Thyroid gland (tissue), 4 donors: ENCODE measurements at regions of chr22 and their contacts with region 1.

Region 1: GRCh38 chr22:24951942-24952836 is at the start of gene KIAA1671:
- DNase-seq: peak; percentile 90 to 93
- H3K4me3 ChIP-seq: peak within 1 kb of the TSS; percentile 69 to 84 (median 73)
- H3K27ac ChIP-seq: peak within 1 kb of the TSS; percentile 78 to 94 (median 84)
- H3K4me1 ChIP-seq: peaks cover 14 to 31% of the 10 kb centered on the region in 2 donors
- H3K27me3 ChIP-seq: no peaks in the 10 kb centered on the region
- CTCF ChIP-seq: peak; percentile 86 to 99 (median 96)
- POLR2A ChIP-seq: peak; percentile 93 to 96
- total RNA-seq, gene KIAA1671: 63.2 to 111 (median 79.7) TPM

Region 2: DNA sequence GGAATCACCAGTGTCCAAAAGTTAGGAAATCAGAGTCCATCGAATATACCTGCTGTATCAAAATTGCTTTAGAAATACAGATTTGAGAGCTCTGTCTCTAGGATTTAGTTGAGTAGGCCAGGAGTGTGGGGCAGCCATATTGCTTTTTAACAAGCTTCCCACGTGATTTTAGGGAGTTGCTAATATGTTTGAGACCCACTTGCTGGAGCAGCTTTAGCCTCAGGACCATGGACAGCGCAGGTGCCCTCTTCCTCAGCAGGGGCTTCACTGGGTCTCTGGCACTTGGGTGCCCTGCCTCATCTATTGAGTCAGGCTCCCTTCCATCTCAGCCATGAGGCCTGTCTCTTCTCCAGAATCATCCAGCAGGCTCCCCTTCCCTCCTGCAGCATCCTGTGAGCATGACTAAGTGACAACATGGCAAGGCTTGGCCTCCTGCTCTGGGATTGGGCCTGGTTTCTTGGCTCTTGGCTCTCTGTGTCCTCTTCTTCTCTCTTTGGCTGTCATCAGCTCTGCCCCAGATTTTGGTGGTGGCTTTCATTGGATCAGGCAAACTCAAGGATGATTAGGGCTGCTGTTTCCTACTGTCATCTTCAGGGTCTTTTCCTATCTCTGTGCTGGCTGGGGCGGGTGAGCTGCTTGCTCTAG is 76.2 kb before region 1 on chr22:
- intact Hi-C with region 1: no loop called
- DNase-seq: peak in 1 of 2 donors; percentile 26
- H3K4me3 ChIP-seq: no peak overlapping the region
- H3K27ac ChIP-seq: no peak overlapping the region
- H3K4me1 ChIP-seq: no peaks in the 10 kb centered on the region
- H3K27me3 ChIP-seq: no peaks in the 10 kb centered on the region
- CTCF ChIP-seq: no peak
- POLR2A ChIP-seq: no peak

Region 3: DNA sequence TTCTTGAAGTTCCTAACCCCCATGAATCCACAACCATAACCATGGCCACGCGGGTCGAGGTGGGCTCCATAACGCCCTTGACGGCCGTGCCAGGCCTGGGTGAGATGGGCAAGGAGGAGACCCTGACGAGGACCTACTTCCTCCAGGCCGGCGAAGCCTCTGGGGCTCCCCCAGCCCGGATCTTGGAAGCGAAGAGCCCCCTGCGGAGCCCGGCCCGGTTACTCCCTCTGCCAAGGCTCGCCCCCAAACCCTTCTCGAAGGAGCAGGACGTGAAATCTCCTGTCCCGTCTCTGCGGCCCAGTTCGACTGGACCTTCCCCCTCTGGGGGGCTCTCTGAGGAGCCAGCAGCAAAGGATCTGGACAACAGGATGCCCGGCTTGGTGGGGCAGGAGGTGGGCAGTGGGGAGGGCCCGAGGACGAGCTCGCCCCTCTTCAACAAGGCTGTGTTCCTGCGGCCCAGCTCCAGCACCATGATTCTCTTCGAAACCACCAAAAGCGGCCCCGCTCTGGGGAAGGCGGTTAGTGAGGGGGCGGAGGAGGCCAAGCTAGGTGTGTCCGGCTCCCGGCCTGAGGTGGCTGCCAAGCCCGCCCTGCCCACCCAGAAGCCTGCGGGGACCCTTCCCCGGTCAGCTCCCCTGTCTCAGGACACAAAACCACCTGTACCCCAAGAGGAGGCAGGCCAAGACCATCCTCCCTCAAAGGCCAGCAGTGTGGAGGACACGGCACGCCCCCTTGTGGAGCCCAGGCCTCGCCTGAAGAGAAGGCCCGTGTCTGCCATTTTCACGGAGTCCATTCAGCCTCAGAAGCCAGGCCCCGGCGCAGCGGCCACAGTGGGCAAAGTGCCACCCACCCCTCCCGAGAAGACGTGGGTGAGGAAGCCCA is 76.0 kb after region 1 on chr22:
- intact Hi-C with region 1: loop called (anchors 5 kb)
- DNase-seq: no peak
- H3K4me3 ChIP-seq: no peak overlapping the region
- H3K27ac ChIP-seq: peak overlapping the region in 2 of 3 donors; percentile 1 to 60
- H3K4me1 ChIP-seq: peaks cover 28 to 39% of the 10 kb centered on the region in 2 donors
- H3K27me3 ChIP-seq: no peaks in the 10 kb centered on the region
- CTCF ChIP-seq: peak in 2 of 6 experiments; percentile 15 to 30
- POLR2A ChIP-seq: no peak

Region 4: DNA sequence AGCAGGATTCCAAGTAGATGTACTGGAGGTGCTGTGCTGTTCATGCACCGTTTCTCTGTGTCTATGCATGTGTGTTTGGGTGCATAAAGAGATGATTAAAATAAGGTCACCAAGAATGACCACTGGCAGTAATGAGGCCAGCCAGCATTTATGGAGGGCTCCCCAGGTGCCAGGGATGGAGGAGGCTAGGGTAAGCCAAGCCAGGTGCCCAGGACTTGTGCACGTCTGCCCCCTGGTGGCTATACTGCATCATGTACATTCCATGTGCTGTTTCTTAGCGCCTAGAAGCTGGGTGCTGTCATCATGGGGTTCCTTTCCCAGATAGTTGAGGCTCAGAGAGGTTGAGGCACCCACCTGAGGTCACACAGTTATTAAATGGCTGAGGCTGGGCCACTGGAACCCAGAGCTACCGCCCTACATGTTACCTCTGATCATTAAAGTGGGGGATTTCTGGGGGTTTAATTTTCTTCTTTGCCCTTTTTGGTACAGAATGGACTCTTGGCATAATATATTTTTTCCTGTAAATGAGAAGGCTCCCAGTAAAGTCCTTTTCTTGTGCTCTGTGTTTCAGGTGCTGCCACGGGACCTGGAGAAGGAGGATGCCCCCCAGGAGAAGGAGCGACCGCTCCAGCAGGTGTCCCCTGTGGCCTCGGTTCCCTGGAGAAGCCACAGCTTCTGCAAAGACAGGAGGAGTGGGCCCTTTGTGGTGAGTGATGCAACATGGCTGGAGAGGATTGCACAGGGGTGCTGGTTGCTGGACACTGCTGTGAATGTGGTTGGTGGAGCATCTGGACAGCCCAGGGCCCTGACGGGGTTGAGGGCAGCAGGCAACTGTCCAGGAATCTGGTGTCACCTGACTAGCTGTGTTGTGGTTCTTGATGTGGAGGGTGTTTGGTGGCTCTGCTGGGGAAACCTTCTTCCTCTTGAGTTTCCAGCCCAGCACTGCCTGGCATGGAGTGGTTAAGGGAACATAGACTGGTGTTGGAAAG is 96.8 kb after region 1 on chr22:
- intact Hi-C with region 1: loop called (anchors 2 kb)
- DNase-seq: peak; percentile 75 to 77
- H3K4me3 ChIP-seq: no peak overlapping the region
- H3K27ac ChIP-seq: peak overlapping the region in 2 of 3 donors; percentile 24 to 91
- H3K4me1 ChIP-seq: peaks cover 36 to 38% of the 10 kb centered on the region in 2 donors
- H3K27me3 ChIP-seq: no peaks in the 10 kb centered on the region
- CTCF ChIP-seq: peak; percentile 84 to 94 (median 86)
- POLR2A ChIP-seq: no peak

Region 5: DNA sequence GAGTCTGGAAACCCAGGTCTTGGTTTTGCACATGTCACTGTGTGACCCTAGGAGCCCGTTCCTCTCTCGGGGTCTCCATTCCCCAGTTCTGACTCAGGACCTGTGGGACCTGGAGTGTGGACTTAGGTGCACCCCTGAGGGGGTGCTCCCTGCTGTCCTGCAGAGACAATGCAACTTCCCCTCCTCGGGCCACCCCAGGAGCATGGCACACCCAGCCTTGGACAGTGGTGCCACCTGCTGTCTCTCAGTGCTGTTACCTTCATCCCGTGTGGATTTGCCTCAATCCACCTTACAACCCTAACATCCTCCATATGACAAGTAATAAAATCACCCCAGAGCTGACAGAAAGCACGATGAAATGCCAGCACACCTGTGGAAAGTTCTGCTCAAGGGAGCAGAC is 220.0 kb after region 1 on chr22:
- intact Hi-C with region 1: loop called (anchors 10 kb)
- DNase-seq: peak; percentile 34 to 41
- H3K4me3 ChIP-seq: no peak overlapping the region
- H3K27ac ChIP-seq: no peak overlapping the region
- H3K4me1 ChIP-seq: peaks cover 3 to 17% of the 10 kb centered on the region in 2 donors
- H3K27me3 ChIP-seq: no peaks in the 10 kb centered on the region
- CTCF ChIP-seq: peak in 5 of 6 experiments; percentile 30 to 51 (median 40)
- POLR2A ChIP-seq: no peak

Region 6: DNA sequence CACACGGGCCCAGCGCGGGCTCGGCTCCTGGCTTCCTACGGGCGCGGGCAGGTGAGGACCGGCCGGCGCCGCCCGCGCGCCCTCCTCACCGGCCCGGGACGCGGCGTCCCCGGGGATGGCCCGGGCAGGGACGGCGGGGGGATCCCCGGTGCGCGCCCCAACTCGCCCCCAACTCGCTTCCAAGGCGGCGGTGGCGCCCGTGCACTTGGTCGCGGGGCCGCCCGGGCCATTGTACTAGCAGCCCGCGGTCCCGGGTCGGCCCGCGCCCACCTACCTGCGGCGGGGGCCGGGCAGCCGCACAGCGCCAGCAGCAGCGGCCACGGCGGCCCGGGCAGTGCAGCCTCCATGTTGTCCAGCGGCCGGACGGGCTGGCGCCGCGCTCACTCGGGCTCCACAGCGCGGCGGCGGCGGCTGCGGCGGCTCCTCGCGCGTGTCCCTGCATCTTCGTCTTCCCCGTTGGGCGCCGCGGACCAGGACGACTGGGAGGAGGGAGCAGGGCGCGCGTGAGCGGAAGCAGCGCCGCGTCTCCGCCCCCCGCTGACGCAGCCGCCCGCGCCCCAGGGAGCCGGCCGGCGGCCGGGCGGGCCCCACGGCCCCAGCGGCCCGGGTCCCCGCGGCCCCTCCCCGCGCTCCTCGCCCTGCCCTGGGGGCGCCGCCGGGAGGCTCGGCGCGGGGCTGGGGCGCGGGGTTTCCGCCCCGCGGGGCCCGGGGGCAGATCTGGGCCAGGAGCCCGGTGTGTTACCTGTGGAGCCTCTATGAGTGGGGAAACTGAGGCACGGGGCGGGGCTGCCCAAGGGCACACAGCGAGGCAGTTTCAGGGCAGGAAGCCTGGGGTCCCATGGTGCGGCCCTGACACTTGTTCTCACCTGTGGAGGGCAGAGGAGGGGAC is 453.0 kb after region 1 on chr22:
- intact Hi-C with region 1: no loop called
- DNase-seq: peak; percentile 85 to 86
- H3K4me3 ChIP-seq: peak overlapping the region; percentile 56 to 62 (median 60)
- H3K27ac ChIP-seq: peak overlapping the region; percentile 93 to 98 (median 97)
- H3K4me1 ChIP-seq: peaks cover 42 to 62% of the 10 kb centered on the region in 2 donors
- H3K27me3 ChIP-seq: no peaks in the 10 kb centered on the region
- CTCF ChIP-seq: no peak
- POLR2A ChIP-seq: peak; percentile 94 to 99